Activated B cell treated with CpG ODN at 0.5 μM for 24 hours (primary cell): ENCODE measurements at regions of chr15 and their contacts with region 1.

Region 1: GRCh38 chr15:70488002-70488605 is 275.3 kb downstream of the UACA start:
- DNase-seq: peak; percentile 68
- ATAC-seq: no peak
- H3K4me3 Mint-ChIP-seq: no peak overlapping the region
- H3K27ac Mint-ChIP-seq: peak overlapping the region; percentile 35
- H3K4me1 Mint-ChIP-seq: peaks cover 60% of the 10 kb centered on the region
- H3K27me3 Mint-ChIP-seq: no peaks in the 10 kb centered on the region
- CTCF ChIP-seq: peak; percentile 95

Region 2: GRCh38 chr15:69576035-69576526 is 912.0 kb before region 1 on chr15:
- CTCF ChIA-PET with region 1: interaction called, 17 read pairs
- POLR2A ChIA-PET with region 1: no interaction called
- intact Hi-C with region 1: loop called (anchors 1 kb)
- DNase-seq: peak; percentile 57
- ATAC-seq: peak; percentile 83
- H3K4me3 Mint-ChIP-seq: no peak overlapping the region
- H3K27ac Mint-ChIP-seq: no peak overlapping the region
- H3K4me1 Mint-ChIP-seq: peaks cover 14% of the 10 kb centered on the region
- H3K27me3 Mint-ChIP-seq: peaks cover 11% of the 10 kb centered on the region
- CTCF ChIP-seq: no peak

Region 3: GRCh38 chr15:69881766-69882165 is 606.3 kb before region 1 on chr15:
- CTCF ChIA-PET with region 1: no interaction called
- POLR2A ChIA-PET with region 1: no interaction called
- intact Hi-C with region 1: loop called (anchors 2 kb)
- DNase-seq: peak; percentile 54
- ATAC-seq: peak; percentile 94
- H3K4me3 Mint-ChIP-seq: peak overlapping the region; percentile 73
- H3K27ac Mint-ChIP-seq: peak overlapping the region; percentile 82
- H3K4me1 Mint-ChIP-seq: peaks cover 36% of the 10 kb centered on the region
- H3K27me3 Mint-ChIP-seq: peaks cover 3% of the 10 kb centered on the region
- CTCF ChIP-seq: no peak

Region 4: DNA sequence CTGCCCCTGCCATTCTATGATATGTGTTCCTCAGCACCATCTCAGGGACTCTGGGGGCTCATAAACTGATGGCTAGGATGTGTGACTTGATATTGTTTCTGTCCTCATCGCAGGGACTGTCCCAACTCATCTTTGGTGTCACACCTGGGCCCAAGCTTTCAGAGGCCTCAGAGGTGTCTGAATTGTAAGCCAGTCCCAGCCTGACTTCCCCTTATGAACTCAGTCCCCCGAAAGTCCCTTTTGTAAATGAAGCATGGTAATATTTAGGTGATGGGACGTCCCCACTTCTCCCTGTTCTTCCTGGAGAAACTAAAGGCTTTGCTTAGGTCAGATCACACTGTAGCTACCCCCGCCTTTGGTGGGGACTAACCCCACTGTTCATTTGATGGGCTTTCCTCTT is 248.0 kb before region 1 on chr15:
- CTCF ChIA-PET with region 1: interaction called, 3 read pairs
- POLR2A ChIA-PET with region 1: interaction called, 3 read pairs
- intact Hi-C with region 1: loop called (anchors 5 kb)
- DNase-seq: no peak
- ATAC-seq: peak; percentile 97
- H3K4me3 Mint-ChIP-seq: peak overlapping the region; percentile 39
- H3K27ac Mint-ChIP-seq: peak overlapping the region; percentile 62
- H3K4me1 Mint-ChIP-seq: peaks cover 49% of the 10 kb centered on the region
- H3K27me3 Mint-ChIP-seq: no peaks in the 10 kb centered on the region
- CTCF ChIP-seq: no peak

Region 5: GRCh38 chr15:70435369-70435768 is 52.7 kb before region 1 on chr15:
- CTCF ChIA-PET with region 1: no interaction called
- POLR2A ChIA-PET with region 1: interaction called, 3 read pairs
- intact Hi-C with region 1: loop called (anchors 2 kb)
- DNase-seq: peak; percentile 44
- ATAC-seq: peak; percentile 93
- H3K4me3 Mint-ChIP-seq: peak overlapping the region; percentile 55
- H3K27ac Mint-ChIP-seq: peak overlapping the region; percentile 67
- H3K4me1 Mint-ChIP-seq: peaks cover 28% of the 10 kb centered on the region
- H3K27me3 Mint-ChIP-seq: no peaks in the 10 kb centered on the region
- CTCF ChIP-seq: no peak

Region 6: DNA sequence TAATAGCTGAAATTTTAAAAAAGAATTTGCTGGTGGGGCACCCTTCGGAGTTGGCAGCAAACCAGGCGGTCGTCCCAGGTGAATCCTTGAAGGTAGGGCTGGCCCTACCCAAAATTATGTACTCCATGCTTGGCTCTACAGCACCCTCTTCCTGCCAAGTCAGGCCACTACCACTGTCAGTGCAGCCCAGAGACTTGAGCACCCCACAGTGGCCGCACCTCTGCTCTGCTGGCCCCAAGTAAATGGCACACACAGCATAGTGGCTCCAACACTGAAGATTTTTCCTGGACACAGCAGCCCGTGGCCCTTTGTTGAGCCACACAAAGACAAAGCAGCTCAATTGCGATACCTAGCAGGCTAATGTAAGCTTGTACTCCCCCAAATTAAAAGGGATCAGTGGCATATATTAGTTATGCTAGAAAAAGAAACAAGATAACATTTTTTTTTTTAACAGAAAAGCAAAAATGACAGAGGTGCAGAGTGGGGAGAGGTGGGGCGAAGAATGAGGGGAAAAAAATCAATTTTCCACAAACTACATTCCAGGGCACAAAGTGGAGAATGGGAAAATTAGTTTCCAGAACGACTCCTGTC is 24.8 kb after region 1 on chr15:
- CTCF ChIA-PET with region 1: interaction called, 5 read pairs
- POLR2A ChIA-PET with region 1: interaction called, 3 read pairs
- intact Hi-C with region 1: loop called (anchors 1 kb)
- DNase-seq: no peak
- ATAC-seq: peak; percentile 80
- H3K4me3 Mint-ChIP-seq: no peak overlapping the region
- H3K27ac Mint-ChIP-seq: no peak overlapping the region
- H3K4me1 Mint-ChIP-seq: peaks cover 32% of the 10 kb centered on the region
- H3K27me3 Mint-ChIP-seq: peaks cover 5% of the 10 kb centered on the region
- CTCF ChIP-seq: no peak